ENCODE measurements at regions of chr7 and their contacts with region 1.

Region 1: GRCh38 chr7:98251841-98252639 is at the start of gene TECPR1:
- DNase-seq: peak; percentile 94
- ATAC-seq: peak; percentile 92
- H3K4me3 Mint-ChIP-seq: peak within 1 kb of the TSS; percentile 93
- H3K27ac Mint-ChIP-seq: peak within 1 kb of the TSS; percentile 98
- H3K4me1 Mint-ChIP-seq: peaks cover 50% of the 10 kb centered on the region
- H3K27me3 Mint-ChIP-seq: no peaks in the 10 kb centered on the region
- total RNA-seq, gene TECPR1: 21.8 to 26.5 TPM

Region 2: DNA sequence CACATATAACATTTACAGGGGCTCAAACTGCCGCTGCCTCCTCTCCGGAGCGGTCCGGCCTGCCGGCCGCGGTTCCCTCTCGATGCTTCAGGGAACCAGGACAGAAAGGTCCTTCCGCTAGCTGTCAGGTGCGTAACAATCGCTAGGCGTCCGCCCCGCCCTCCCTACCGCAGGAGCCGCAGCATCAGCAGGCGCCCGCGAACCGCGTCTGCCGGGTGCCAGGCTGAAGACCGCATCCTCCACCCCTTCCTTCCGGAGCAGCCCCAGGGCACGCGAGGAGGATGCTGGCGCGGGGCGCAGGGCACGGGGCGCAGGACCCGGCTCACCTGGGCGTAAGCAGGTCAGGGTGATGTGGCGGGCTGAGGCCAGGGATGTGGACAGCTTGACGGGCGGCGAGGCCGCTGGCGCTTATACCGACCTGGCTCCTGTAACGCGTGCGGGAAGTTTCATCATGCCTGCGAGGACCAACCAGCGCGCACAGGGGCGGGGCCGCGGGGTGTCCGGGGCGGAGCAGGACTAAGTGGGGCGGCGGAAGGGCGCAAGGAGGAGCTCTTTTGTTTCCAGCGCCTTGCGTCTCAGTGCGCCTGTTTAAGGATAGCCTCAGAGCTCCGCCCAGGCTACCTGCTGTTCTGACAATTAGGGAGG is 379.9 kb before region 1 on chr7 and contains the start of gene ASNS:
- CTCF ChIA-PET with region 1: no interaction called
- POLR2A ChIA-PET with region 1: no interaction called
- intact Hi-C with region 1: loop called in 1 of 2 experiments (anchors 2 kb)
- DNase-seq: peak; percentile 96
- ATAC-seq: peak; percentile 96
- H3K4me3 Mint-ChIP-seq: peak within 1 kb of the TSS; percentile 92
- H3K27ac Mint-ChIP-seq: peak within 1 kb of the TSS; percentile 82
- H3K4me1 Mint-ChIP-seq: peaks cover 20% of the 10 kb centered on the region
- H3K27me3 Mint-ChIP-seq: no peaks in the 10 kb centered on the region
- total RNA-seq, gene ASNS: 228 to 247 TPM

Region 3: GRCh38 chr7:98051118-98051744 is 200.8 kb before region 1 on chr7:
- CTCF ChIA-PET with region 1: no interaction called
- POLR2A ChIA-PET with region 1: no interaction called
- intact Hi-C with region 1: no loop called
- DNase-seq: peak; percentile 84
- ATAC-seq: peak; percentile 83
- H3K4me3 Mint-ChIP-seq: no peak overlapping the region
- H3K27ac Mint-ChIP-seq: no peak overlapping the region
- H3K4me1 Mint-ChIP-seq: peaks cover 6% of the 10 kb centered on the region
- H3K27me3 Mint-ChIP-seq: peaks cover 4% of the 10 kb centered on the region

Region 4: GRCh38 chr7:98106647-98107445 is 145.2 kb before region 1 on chr7 and contains the start of gene LMTK2:
- CTCF ChIA-PET with region 1: interaction called, 5 read pairs
- POLR2A ChIA-PET with region 1: no interaction called
- intact Hi-C with region 1: loop called (anchors 1 kb)
- DNase-seq: peak; percentile 98
- ATAC-seq: peak; percentile 100
- H3K4me3 Mint-ChIP-seq: peak within 1 kb of the TSS; percentile 95
- H3K27ac Mint-ChIP-seq: peak within 1 kb of the TSS; percentile 90
- H3K4me1 Mint-ChIP-seq: peaks cover 31% of the 10 kb centered on the region
- H3K27me3 Mint-ChIP-seq: peaks cover 6% of the 10 kb centered on the region
- total RNA-seq, gene LMTK2: 10.0 to 16.9 TPM

Region 5: GRCh38 chr7:98202367-98203195 is 49.5 kb before region 1 on chr7:
- CTCF ChIA-PET with region 1: no interaction called
- POLR2A ChIA-PET with region 1: no interaction called
- intact Hi-C with region 1: loop called (anchors 2 kb)
- DNase-seq: peak; percentile 84
- ATAC-seq: peak; percentile 91
- H3K4me3 Mint-ChIP-seq: peak overlapping the region; percentile 46
- H3K27ac Mint-ChIP-seq: peak overlapping the region; percentile 88
- H3K4me1 Mint-ChIP-seq: peaks cover 55% of the 10 kb centered on the region
- H3K27me3 Mint-ChIP-seq: no peaks in the 10 kb centered on the region

Region 6: GRCh38 chr7:98878365-98879165 is 626.5 kb after region 1 on chr7 and contains the start of gene TRRAP:
- CTCF ChIA-PET with region 1: interaction called, 3 read pairs
- POLR2A ChIA-PET with region 1: no interaction called
- intact Hi-C with region 1: loop called in 1 of 2 experiments (anchors 1 kb)
- DNase-seq: peak; percentile 88
- ATAC-seq: peak; percentile 67
- H3K4me3 Mint-ChIP-seq: peak within 1 kb of the TSS; percentile 91
- H3K27ac Mint-ChIP-seq: peak within 1 kb of the TSS; percentile 96
- H3K4me1 Mint-ChIP-seq: peaks cover 30% of the 10 kb centered on the region
- H3K27me3 Mint-ChIP-seq: no peaks in the 10 kb centered on the region
- total RNA-seq, gene TRRAP: 51.7 to 54.0 TPM

Measured in activated CD4-positive, alpha-beta T cell treated with anti-CD3 and anti-CD28 coated beads for 36 hours (primary cell).